CD8-positive, alpha-beta T cell (primary cell): ENCODE measurements at regions of chr11 and their contacts with region 1.

Region 1: DNA sequence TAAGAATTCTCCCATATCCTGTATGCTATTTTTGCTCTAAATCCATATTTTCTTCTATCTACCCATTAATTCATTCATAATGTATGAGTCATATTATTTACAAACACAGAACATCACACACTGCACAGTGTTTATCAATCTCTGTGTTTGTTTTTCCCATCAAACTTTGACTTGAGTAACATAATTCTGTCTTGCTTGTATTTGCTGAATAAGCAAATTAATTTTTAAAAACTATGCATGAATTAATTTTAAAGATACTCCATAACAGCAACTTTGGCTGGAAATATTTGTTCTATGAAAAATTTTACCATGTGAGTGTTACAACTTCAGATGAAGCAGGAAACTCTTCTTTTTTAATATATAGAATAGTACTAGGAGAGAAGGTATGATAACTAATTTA is 275.6 kb downstream of the GRM5 start:
- DNase-seq: no peak
- ATAC-seq: no peak
- H3K4me3 ChIP-seq: no peak overlapping the region
- H3K4me3 Mint-ChIP-seq: no peak overlapping the region
- H3K27ac ChIP-seq: no peak overlapping the region
- H3K27ac Mint-ChIP-seq: no peak overlapping the region
- H3K4me1 ChIP-seq: no peaks in the 10 kb centered on the region
- H3K4me1 Mint-ChIP-seq: no peaks in the 10 kb centered on the region
- H3K27me3 ChIP-seq: no peaks in the 10 kb centered on the region
- H3K27me3 Mint-ChIP-seq: no peaks in the 10 kb centered on the region
- CTCF ChIP-seq: no peak

Region 2: GRCh38 chr11:88266919-88267318 is 523.3 kb before region 1 on chr11:
- CTCF ChIA-PET with region 1: no interaction called
- POLR2A ChIA-PET with region 1: no interaction called
- intact Hi-C with region 1: no loop called
- DNase-seq: no peak
- ATAC-seq: no peak
- H3K4me3 ChIP-seq: no peak overlapping the region
- H3K4me3 Mint-ChIP-seq: no peak overlapping the region
- H3K27ac ChIP-seq: no peak overlapping the region
- H3K27ac Mint-ChIP-seq: no peak overlapping the region
- H3K4me1 ChIP-seq: no peaks in the 10 kb centered on the region
- H3K4me1 Mint-ChIP-seq: no peaks in the 10 kb centered on the region
- H3K27me3 ChIP-seq: no peaks in the 10 kb centered on the region
- H3K27me3 Mint-ChIP-seq: no peaks in the 10 kb centered on the region
- CTCF ChIP-seq: no peak

Region 3: GRCh38 chr11:88849368-88849767 is 59.2 kb after region 1 on chr11:
- CTCF ChIA-PET with region 1: no interaction called
- POLR2A ChIA-PET with region 1: no interaction called
- intact Hi-C with region 1: loop called in 1 of 2 experiments (anchors 5 kb)
- DNase-seq: no peak
- ATAC-seq: no peak
- H3K4me3 ChIP-seq: no peak overlapping the region
- H3K4me3 Mint-ChIP-seq: no peak overlapping the region
- H3K27ac ChIP-seq: no peak overlapping the region
- H3K27ac Mint-ChIP-seq: no peak overlapping the region
- H3K4me1 ChIP-seq: peaks cover 18% of the 10 kb centered on the region
- H3K4me1 Mint-ChIP-seq: peaks cover 18% of the 10 kb centered on the region
- H3K27me3 ChIP-seq: no peaks in the 10 kb centered on the region
- H3K27me3 Mint-ChIP-seq: no peaks in the 10 kb centered on the region
- CTCF ChIP-seq: no peak